CD8-positive, alpha-beta T cell (primary cell): ENCODE measurements at regions of chr5 and their contacts with region 1.

Region 1: DNA sequence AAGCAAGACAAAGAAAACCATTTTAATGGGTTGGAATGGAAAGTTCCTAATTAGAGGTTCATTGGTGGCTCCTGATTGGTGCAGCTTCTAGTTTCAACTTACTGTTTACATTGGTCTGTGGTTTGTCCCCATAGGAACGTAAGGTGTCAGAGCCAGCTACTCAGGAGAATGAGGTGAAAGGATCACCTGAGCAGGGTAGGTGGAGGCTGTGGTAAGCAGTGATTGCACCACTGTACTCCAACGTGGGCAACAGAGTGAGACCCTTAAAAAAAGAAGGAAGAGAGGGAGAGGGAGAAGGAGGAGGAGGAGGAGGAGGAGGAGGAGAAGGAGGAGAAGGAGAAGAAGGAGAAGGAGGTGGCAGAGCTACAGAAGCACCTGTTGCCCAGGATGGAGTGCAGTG is 30.4 kb downstream of the KCNIP1 start:
- DNase-seq: no peak
- ATAC-seq: no peak
- H3K4me3 ChIP-seq: no peak overlapping the region
- H3K4me3 Mint-ChIP-seq: no peak overlapping the region
- H3K27ac ChIP-seq: no peak overlapping the region
- H3K27ac Mint-ChIP-seq: no peak overlapping the region
- H3K4me1 ChIP-seq: no peaks in the 10 kb centered on the region
- H3K4me1 Mint-ChIP-seq: no peaks in the 10 kb centered on the region
- H3K27me3 ChIP-seq: no peaks in the 10 kb centered on the region
- H3K27me3 Mint-ChIP-seq: peaks cover 21% of the 10 kb centered on the region
- CTCF ChIP-seq: no peak

Region 2: DNA sequence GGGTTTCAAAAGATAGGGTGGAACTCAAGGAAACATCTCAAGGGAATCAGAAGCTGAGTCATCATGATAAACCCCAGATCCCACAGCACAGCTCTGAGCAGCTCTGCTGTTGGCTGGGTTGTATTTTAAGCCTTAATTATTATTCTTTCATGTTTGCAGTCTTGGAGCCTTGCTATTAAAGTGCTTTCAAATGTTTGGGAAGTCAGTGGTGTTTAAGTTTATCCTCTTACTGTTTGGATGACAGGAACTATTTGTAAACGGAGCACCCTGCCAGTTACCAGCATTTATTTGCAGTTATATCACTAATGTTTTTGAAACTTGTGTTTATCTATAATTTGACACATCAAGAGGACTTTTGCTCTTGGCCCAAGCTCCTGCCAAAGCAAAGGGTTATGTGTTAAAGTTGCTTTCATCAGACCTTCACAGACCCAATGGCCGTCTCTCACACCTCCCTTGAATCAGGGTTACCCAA is 1091.7 kb before region 1 on chr5:
- CTCF ChIA-PET with region 1: no interaction called
- POLR2A ChIA-PET with region 1: no interaction called
- intact Hi-C with region 1: loop called in 1 of 2 experiments (anchors 5 kb)
- DNase-seq: no peak
- ATAC-seq: no peak
- H3K4me3 ChIP-seq: no peak overlapping the region
- H3K4me3 Mint-ChIP-seq: no peak overlapping the region
- H3K27ac ChIP-seq: no peak overlapping the region
- H3K27ac Mint-ChIP-seq: no peak overlapping the region
- H3K4me1 ChIP-seq: no peaks in the 10 kb centered on the region
- H3K4me1 Mint-ChIP-seq: no peaks in the 10 kb centered on the region
- H3K27me3 ChIP-seq: peaks cover 0 to 5% of the 10 kb centered on the region in 2 experiments
- H3K27me3 Mint-ChIP-seq: peaks cover 18% of the 10 kb centered on the region
- CTCF ChIP-seq: no peak